Activated CD4-positive, alpha-beta T cell treated with anti-CD3 and anti-CD28 coated beads, Interleukin-2, amount 10 ng/mL, durations not matched to agents 24 days and 14 days (primary cell): ENCODE measurements at regions of chr7 and their contacts with region 1.

Region 1: DNA sequence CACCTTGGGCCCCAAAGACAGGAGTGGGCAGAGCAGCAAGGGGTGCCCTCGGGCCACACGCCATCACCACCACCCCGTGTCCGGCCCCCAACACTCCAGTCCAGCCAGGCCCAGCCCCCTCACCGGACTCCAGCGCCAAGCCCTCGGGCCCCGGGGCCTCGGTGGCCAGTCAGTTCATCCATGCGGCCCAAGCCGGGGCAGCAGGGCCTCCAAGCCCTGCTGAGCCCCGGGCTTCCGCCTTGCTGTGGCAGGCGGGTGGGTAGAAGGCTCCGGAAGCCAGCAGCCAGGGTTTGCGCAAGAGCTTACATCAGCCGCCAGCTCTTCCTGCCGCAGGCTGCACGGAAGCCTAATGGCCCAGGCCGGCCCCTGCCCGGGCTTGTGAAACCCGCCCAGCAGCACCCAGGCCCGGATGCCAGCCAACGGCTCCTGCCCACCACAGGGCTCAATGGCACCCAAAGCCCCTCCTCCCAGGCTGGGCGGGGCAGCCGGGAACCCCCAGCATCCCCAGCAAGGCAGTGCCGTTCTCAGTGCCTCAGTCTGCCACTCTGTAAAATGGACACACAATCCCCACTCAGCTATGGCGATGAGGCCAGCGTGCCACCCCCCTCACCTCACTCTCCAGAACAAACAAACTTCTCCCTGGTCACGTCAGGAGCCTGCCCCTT is 26.5 kb downstream of the TNRC18 start:
- DNase-seq: peak; percentile 95
- H3K4me3 Mint-ChIP-seq: peak overlapping the region; percentile 83
- H3K27ac Mint-ChIP-seq: peak overlapping the region; percentile 95
- H3K4me1 Mint-ChIP-seq: peaks cover 25% of the 10 kb centered on the region
- H3K27me3 Mint-ChIP-seq: no peaks in the 10 kb centered on the region

Region 2: GRCh38 chr7:5193880-5194279 is 203.3 kb before region 1 on chr7:
- intact Hi-C with region 1: loop called (anchors 1 kb)
- DNase-seq: no peak
- H3K4me3 Mint-ChIP-seq: no peak overlapping the region
- H3K27ac Mint-ChIP-seq: no peak overlapping the region
- H3K4me1 Mint-ChIP-seq: peaks cover 13% of the 10 kb centered on the region
- H3K27me3 Mint-ChIP-seq: no peaks in the 10 kb centered on the region

Region 3: DNA sequence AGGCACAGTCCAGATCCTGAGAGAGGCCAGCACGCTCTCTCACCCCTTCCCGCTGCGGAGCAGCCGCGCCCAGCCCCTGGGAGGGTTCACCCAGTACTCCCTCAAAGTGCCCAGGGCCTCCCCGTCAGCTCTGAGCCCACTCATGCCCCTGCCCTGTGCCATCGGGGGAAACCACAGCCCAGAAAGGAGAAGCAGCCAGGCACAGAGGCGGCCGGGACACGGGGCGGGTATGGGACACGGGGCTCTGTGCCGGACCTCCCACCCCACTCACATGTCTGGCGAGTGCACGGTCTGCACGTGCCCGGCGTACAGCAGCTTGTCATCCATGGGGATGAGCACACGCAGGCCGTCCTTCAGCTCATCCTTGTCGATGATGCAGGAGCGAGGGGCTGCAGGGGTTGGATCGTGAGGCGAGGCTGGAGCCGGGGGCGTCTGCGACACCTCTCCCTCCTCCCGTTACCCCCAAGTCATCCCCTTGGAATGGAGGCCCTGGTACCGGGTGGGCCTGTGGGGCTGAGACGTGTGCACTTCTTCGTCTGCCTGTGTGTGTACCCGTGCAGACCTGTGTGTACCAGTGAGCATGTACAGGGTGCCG is 76.2 kb before region 1 on chr7:
- intact Hi-C with region 1: no loop called
- DNase-seq: no peak
- H3K4me3 Mint-ChIP-seq: no peak overlapping the region
- H3K27ac Mint-ChIP-seq: no peak overlapping the region
- H3K4me1 Mint-ChIP-seq: no peaks in the 10 kb centered on the region
- H3K27me3 Mint-ChIP-seq: no peaks in the 10 kb centered on the region

Region 4: DNA sequence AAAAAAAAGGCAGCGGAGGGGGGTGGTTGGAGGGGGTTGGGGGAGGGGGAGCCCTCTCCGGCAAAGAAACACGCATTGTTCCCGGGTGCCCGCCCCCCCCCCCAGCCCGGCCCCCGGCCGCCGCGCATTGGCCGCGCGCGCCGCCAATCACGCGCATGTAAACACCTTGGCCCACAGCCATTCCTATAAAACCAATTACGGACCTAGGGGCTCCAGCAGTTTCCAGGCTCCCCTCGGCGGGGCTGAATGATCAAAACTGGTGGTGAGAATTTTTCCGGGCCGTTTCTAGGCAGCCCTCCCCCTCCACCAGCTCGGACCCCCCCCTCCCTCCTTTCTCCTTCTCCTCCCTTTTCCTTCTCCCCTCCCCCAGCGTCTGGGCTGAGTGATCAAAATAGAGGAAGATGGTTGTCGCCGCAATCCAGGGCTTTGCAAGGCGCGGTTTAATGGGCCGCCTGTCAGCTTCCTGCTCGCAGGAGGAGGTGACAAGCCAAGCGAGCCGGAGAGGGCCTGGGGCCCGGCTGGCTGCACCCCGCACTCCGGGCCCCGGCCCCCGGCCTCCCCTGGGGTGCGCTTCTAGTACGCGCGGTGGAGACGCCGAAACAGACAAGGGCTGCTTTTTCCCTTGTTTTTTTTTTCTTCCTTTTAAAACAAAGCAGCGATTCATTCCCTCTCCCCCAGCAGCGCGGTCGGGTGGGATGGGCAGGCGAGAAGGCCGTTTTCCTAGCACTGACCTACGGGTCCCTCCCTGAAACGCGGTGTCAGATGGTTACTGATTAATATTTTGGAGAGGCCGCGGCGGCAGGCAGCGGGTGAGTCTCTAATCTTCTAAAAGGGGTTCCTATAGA is 26.9 kb after region 1 on chr7:
- intact Hi-C with region 1: loop called (anchors 2 kb)
- DNase-seq: peak; percentile 82
- H3K4me3 Mint-ChIP-seq: peak overlapping the region; percentile 81
- H3K27ac Mint-ChIP-seq: peak overlapping the region; percentile 71
- H3K4me1 Mint-ChIP-seq: peaks cover 15% of the 10 kb centered on the region
- H3K27me3 Mint-ChIP-seq: peaks cover 54% of the 10 kb centered on the region

Region 5: DNA sequence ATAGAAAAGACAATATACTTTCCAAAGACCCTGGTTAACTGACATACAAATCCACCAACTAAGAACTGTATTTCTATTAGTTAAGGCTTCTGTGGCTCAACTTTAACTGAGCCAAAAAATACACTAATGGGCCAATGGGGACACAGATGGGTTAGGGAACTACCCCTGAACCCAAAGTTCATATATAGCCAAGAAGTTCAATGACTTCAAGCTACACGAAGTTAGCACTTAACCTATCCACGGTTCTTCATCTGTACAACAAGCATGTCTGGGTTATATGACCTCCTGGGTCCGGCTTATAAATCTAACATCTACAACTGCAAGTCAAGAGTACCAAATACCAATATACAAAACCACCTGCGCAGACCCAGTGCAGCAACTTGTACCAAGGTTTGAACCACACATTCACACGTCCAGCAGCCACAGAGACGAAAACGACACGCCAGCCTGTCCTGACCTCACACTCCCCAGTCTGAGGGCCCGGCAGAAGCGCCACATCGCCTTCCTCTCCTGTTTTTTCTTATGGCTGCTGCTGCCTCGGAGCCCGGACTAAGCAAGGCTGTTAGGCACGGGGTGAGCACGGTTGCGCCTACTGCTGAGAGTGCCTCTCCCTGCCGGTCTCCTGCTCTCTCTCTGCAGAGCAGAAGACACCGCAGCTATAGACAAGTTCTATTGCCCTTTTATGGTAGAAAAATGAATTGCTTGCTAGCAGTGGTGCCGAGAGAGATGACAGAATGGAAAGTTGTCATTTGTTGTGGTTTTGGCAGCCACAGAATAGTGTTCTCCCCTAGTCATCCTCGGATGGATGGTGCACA is 298.0 kb after region 1 on chr7:
- intact Hi-C with region 1: loop called (anchors 10 kb)
- DNase-seq: peak; percentile 94
- H3K4me3 Mint-ChIP-seq: peak overlapping the region; percentile 89
- H3K27ac Mint-ChIP-seq: peak overlapping the region; percentile 95
- H3K4me1 Mint-ChIP-seq: peaks cover 79% of the 10 kb centered on the region
- H3K27me3 Mint-ChIP-seq: peaks cover 8% of the 10 kb centered on the region